Head of caudate nucleus (tissue), 42 donors: ENCODE measurements at regions of chr1 and their contacts with region 1.

Region 1: DNA sequence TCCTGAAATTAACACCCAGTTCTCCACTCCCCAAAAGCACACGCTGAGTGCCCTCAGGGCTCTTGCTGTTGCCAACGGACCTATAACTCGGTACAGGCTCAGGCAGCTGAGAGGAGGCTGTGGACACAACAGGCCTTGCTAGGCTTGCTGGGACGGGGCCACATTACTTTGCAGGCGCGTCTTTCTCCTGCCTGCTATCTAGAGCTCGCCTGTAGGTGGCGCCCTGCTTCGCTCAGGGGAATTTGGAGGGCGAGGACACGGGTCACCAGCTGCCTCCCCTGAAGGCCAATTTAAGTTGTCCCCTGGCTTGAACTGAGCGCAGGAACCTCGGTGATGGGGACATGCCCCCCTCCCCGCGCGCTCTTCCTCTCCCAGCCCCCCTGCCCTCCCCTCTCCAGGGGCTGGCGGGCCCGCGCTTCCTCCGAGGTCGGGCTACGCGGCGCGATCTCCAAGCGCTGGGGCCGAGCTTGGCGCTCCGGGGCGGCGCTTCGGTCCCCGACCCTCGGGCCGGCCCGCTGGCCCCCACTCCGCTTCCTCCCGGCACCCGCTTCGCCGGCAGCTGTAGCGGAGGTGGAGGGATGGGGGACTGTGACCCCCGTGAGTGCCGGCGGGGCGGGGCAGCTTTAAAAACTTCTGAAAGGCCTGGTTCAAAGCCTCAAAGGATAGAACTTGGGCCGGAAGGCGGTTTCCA is 32.4 kb upstream of the NFIA start:
- DNase-seq: peak; percentile 82 to 98 (median 95)

Region 2: GRCh38 chr1:60281360-60281932 is 768.5 kb before region 1 on chr1:
- intact Hi-C with region 1: loop called (anchors 10 kb)
- DNase-seq: peak; percentile 45 to 90 (median 76)

Region 3: GRCh38 chr1:61192663-61193330 is 142.8 kb after region 1 on chr1:
- intact Hi-C with region 1: no loop called
- DNase-seq: no peak

Region 4: DNA sequence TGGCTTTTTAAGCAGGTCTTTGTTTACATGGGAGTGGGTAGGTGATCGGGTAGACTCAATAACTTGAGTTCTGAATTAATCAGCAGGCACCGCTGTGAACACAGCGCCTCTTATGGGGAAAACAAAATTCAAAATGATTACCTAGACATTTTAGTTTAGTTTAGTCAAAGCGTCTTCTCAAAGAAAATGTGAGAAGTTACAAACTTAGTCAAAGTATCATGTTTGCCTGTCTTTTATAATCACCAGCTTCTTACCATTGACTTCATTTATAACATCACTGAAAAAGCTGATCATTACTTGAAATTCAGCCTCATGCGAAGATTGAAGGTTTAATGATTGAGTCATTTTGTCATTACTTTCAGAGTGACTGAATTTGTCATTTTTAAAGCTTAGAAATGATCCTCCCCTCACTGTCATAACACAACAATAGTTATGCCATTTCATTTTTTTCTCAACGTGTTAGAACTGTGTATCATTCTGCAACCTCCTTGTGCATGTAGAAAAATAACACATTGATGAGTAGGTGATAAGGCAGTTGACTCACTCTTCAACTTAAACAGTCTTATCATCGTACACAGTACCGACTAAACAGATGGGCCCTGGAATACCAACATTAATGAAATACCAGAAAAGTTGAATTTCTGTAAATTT is 220.9 kb after region 1 on chr1:
- intact Hi-C with region 1: loop called (anchors 5 kb)
- DNase-seq: no peak

Region 5: DNA sequence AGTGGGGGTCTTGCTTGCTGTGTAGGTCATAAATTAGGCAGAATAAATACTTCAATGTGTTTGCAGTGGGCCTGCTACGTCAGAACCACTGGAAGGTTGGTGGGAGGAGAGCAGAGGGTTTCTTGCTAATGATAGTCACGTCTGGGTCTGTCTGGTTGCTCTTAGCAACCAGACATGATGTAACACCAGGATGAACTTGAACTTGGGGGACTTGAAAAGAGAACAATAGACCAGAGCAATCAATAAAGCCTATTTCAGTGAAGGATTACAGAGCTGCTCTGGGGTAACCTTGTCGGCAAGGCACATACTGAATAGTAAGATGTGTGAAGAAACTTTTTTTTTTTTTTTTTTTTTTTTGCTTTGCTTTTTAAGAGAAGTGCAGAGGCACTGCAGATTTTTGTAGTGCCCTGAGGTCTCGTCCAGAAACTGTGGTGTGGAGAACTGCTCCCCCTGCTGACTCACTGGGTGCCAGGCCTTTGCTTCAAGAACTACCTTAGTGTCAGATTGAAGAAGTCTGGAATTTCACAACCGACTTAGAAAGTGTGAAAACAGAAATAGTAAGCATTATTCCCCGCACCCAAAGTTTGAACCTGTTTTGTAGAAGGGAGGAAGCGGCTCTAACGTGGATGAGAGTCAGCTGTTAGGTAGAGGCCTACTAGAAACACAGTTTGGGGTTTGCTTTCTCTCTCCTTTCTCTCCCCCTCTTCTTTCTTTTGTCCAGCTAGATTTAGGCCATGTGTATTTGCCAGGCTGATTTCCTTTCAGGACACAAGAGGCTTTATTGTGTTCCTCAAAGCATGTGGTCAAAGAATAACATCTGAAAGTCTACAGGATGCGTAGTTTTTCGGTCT is 403.3 kb after region 1 on chr1:
- intact Hi-C with region 1: loop called (anchors 5 kb)
- DNase-seq: peak; percentile 74 to 95 (median 88)

Region 6: DNA sequence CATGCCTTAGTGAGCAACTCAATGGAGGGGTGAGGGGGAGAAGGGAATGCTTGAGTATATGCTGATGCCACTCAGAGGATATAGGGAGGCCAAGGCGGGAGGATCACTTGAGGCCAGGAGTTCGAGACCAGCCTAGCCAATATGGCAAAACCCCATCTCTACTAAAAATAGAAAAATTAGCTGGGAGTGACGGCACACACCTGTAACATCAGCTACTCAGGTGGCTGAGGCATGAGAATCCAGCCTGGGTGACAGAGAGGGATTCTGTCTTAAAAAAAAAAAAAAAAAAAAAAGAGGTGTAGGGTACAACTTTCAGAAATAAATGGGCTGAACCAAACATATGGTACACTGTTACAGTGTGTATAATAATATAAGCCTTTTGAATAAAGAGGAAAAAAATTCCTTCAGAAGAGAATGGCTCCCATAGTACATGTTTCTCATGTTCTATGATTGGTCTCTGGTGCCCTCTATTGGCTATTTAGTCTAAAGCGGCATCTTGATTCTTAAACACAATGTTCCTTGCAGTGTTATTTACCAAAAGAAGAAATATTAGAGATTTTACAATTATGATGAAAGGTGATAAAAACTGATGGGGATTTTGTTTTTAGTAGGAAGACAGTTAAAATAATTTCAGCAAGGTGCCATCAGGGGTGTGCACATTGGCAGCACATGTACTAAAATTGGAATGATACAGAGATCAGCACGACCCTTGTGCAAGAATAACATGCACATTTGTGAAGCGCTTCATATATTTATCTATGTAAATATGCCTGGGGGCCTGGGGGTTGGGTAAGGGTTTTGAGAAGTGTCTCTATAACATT is 802.1 kb after region 1 on chr1:
- intact Hi-C with region 1: loop called (anchors 5 kb)
- DNase-seq: peak in 11 of 42 donors; percentile 19 to 65 (median 31)